ENCODE measurements at regions of chr5 and their contacts with region 1.

Region 1: GRCh38 chr5:149636851-149637246 is 55.6 kb downstream of the ARHGEF37 start:
- DNase-seq: peak in 2 of 3 donors; percentile 64 to 93
- ATAC-seq: peak; percentile 60 to 74
- H3K4me3 ChIP-seq: no peak overlapping the region
- H3K27ac ChIP-seq: no peak overlapping the region
- H3K4me1 ChIP-seq: peaks cover 11% of the 10 kb centered on the region
- H3K27me3 ChIP-seq: no peaks in the 10 kb centered on the region

Region 2: GRCh38 chr5:149828161-149828884 is 191.5 kb after region 1 on chr5:
- intact Hi-C with region 1: loop called (anchors 2 to 5 kb)
- DNase-seq: peak; percentile 84 to 93 (median 90)
- ATAC-seq: peak; percentile 67 to 69
- H3K4me3 ChIP-seq: no peak overlapping the region
- H3K27ac ChIP-seq: peak overlapping the region; percentile 36
- H3K4me1 ChIP-seq: peaks cover 21% of the 10 kb centered on the region
- H3K27me3 ChIP-seq: no peaks in the 10 kb centered on the region

Region 3: DNA sequence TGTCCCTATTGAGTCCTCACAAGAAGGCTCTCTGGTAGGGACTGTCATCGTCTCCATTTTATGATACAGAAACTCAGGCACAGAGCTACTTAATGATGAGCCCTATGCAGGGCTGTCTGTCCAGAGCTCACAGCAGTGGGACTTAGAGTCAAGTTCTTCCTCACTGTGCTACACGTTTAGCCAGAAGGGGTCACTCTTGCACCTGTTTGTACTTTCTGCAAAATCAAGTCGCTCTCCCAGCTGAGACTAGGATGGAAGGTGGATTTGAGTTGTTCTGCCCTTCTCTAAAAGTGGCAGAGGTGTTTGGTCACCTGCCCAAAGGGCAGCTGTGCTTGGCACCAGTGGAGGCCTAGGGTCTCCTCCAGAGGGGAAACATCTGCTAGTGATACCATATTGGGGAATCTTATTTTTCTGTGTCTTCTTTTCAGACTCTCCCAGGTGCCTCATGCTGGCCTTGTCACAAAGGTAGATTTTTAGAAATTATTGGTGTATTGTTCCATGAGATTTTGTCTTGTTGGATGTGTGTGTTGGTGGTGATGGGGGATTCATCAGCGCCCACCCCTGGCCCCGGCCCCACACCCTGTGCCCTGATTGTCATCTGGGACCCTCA is 197.5 kb after region 1 on chr5:
- intact Hi-C with region 1: loop called (anchors 2 to 5 kb)
- DNase-seq: no peak
- ATAC-seq: peak; percentile 53 to 54
- H3K4me3 ChIP-seq: no peak overlapping the region
- H3K27ac ChIP-seq: no peak overlapping the region
- H3K4me1 ChIP-seq: no peaks in the 10 kb centered on the region
- H3K27me3 ChIP-seq: no peaks in the 10 kb centered on the region

Region 4: GRCh38 chr5:149990518-149991376 is 353.9 kb after region 1 on chr5:
- intact Hi-C with region 1: loop called in 3 of 4 experiments (anchors 5 kb)
- DNase-seq: peak; percentile 62 to 76 (median 70)
- ATAC-seq: peak; percentile 75 to 78
- H3K4me3 ChIP-seq: no peak overlapping the region
- H3K27ac ChIP-seq: no peak overlapping the region
- H3K4me1 ChIP-seq: no peaks in the 10 kb centered on the region
- H3K27me3 ChIP-seq: no peaks in the 10 kb centered on the region